Heart right ventricle (tissue), 16 donors: ENCODE measurements at regions of chr5 and their contacts with region 1.

Region 1: DNA sequence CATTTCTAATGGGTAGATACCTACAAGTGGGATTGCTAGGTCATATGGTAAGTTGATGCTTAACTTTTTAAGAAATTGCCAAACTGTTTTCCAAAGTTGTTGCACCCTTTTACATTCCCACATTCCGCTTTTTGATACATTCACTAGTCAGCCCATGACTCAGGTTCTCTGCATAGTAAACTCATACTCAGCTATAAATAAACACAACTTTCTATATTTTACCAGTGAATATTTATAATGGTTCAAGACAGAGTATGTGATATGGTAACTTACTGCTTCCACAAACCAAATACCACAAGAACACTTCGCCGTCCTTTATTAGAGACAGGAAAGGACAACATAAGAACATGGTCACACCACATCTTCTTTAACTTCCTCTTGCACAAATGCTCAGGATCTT is 54.0 kb downstream of the PLPP1 start:
- DNase-seq: no peak
- ATAC-seq: no peak
- H3K4me3 ChIP-seq: no peak overlapping the region
- H3K27ac ChIP-seq: no peak overlapping the region
- H3K4me1 ChIP-seq: peaks cover 0 to 57% (median 17%) of the 10 kb centered on the region in 9 donors
- H3K27me3 ChIP-seq: no peaks in the 10 kb centered on the region
- CTCF ChIP-seq: no peak

Region 2: DNA sequence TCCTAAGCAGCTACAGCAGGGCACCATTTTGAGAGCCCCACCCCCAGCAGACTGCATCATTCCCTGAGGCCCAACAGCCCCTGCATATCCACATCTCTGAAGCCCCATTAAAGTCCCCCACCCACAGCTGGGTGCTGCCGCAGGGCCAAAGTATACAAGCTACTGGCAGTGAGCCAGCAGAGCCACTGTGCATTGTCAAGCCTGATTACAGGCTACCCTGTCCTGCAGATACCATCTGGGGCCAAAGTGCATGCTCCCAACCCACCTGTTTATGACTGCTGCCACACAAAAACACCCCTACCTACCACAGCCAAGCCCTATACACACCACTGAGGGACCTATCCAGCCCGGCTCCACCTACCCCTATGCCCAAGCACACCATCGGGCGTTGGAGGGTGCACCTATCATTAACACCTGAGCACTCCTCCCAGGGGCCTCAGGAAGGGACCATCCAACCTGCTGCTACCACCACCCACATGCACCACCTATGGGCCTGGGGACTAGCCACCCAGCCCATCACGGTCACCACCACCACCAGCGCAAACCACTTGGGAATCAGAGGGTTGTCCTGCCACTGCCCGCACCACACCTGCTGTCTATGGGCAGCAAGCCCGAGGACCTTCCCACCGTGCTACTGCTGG is 51.0 kb before region 1 on chr5:
- intact Hi-C with region 1: loop called in 1 of 10 experiments (anchors 2 kb)
- DNase-seq: peak in 1 of 2 donors; percentile 23
- ATAC-seq: peak; percentile 12 to 58 (median 24)
- H3K4me3 ChIP-seq: no peak overlapping the region
- H3K27ac ChIP-seq: peak overlapping the region in 1 of 10 donors; percentile 2
- H3K4me1 ChIP-seq: peaks cover 2 to 45% (median 22%) of the 10 kb centered on the region in 9 donors
- H3K27me3 ChIP-seq: no peaks in the 10 kb centered on the region
- CTCF ChIP-seq: no peak

Region 3: DNA sequence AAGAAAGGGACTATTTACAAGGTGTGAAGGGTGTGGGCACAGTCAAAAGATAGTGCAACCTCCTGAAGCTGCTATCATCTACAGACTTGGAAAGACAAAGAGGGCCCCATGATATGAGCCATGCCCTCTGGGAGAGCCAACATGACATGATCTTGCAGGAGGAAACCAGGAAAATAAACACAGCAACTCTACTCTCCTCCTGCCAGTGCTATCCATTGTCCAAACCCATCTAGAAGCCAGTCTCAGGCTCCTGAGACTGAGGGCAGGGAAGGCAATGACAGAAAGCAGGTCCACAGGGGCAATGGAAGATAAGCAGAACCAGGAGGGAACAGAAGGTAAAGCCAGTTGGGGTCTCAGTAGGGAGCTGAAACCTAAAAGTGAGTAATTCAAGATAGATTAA is 16.9 kb after region 1 on chr5:
- intact Hi-C with region 1: loop called in 1 of 10 experiments (anchors 1 kb)
- DNase-seq: no peak
- ATAC-seq: peak in 5 of 8 donors; percentile 15 to 59 (median 31)
- H3K4me3 ChIP-seq: no peak overlapping the region
- H3K27ac ChIP-seq: peak overlapping the region in 2 of 10 donors; percentile 1 to 53
- H3K4me1 ChIP-seq: peaks cover 7 to 82% (median 38%) of the 10 kb centered on the region in 9 donors
- H3K27me3 ChIP-seq: no peaks in the 10 kb centered on the region
- CTCF ChIP-seq: no peak